ENCODE measurements at regions of chr5 and their contacts with region 1.

Region 1: DNA sequence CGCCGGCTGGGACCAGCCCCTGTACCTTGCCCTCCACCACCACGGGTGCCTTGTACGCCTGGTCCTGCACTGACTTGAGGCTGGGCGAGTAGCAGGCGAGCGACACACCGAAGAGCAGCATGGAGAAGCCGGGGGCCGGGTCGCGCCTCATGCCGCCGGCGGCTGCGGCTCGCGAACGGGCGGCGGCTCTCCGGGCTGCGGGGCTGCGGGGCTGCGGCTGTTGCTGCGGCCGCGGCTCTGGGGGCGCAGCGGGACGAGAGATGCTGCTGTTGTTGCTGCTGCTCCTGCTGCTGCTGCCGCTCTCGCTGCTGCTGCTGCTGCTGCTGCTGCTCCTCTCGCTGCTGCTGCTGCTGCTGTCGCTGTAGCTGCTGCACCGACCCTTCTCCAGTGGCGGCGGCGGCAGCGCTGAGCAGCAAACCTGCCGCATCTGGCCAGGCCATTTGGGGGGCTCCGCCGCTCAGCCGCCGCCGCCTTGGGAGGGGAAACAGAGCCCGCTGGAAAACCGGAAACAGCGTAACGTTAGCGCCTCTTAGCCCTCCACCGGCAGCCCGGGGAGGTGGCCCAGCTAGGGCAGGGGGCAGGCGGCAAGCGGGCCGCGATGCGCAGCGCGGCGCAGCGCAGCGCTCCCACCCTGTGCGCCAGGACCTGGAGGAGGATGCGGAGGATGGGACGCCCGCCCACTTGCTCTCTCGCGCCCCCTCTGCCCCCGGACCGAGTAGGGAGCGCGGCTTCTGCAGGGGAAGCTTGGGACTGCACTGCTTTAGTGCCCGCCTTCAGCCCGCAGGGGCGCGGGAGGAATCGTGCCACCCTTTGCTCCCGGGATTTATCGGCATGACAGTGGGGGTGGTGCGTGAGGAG is at the start of gene NRG2:
- DNase-seq: peak; percentile 84
- ATAC-seq: peak; percentile 92
- total RNA-seq, gene NRG2: 1.9 TPM

Region 2: GRCh38 chr5:139982157-139982974 is 60.5 kb before region 1 on chr5:
- intact Hi-C with region 1: loop called (anchors 5 kb)
- DNase-seq: no peak
- ATAC-seq: no peak

Region 3: DNA sequence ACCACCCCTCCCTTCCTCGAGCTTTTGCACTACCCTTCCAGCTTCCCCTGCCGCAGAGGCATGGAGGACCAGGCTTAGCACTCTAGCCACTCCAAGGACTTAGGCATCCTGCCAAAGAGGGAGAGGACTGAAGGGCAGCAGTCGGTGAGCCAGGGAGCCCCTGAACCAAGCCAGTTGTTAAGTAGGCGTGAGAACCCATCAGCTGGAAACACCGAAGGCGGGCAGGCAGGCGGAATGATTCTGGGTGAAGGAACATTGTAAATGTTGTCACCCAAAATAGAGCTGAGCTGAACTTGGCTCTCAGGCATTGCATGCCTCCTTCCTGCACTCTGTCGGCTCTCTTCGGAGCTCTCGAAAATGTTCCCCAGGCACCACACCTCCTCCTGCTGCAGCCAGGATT is 42.5 kb before region 1 on chr5:
- intact Hi-C with region 1: loop called (anchors 5 kb)
- DNase-seq: peak; percentile 73
- ATAC-seq: peak; percentile 80

Region 4: DNA sequence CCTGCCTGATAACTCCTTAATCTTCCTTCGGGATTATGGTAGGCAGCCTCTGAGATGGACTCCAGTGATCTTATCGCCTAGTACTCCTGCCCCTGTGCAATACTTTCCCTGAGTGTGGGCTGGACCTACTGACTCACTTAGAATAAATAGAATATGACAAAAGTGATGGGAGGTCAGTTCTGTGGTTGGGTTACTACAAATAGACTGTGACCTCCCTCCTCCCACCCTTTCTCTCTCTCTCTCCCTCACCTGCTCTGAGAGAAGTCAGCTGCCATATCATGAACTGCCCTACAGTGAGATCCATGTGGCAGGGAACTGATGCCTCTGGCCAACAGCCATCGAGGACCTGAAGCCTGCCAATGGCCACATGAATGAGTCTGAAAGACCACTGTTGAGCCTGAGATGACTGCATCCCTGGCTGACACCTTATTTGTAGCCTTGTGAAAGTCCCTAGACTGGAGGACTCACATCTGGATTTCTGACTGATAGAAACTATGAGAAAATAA is 31.5 kb before region 1 on chr5:
- intact Hi-C with region 1: no loop called
- DNase-seq: no peak
- ATAC-seq: peak; percentile 84

Region 5: DNA sequence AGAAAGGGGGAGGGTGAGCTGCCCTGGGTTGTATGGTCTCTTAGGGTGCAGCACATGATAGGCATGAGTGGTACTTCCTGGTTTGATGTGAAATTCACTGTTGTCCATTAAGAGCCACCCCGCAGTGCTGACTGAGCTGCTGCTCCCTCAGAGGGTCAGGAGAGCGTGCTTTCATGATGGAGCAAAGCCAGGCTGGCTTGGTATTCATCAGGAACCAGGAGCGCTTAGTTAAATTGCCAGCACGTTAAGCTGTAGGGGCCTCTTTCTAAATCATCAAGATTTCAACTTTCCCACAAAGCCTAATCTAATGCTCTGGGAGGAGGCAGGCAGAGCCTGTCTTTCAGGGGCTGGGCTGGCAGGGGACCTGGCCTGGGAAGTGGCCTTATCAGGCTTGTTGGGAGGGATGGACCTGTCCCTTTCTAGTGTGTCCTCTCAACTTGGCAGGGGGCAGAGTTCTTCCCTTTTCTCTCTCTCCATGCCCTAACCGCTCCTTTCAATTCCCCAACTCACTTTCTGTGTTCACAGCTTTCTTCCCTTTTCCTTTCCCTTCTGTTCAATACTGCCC is 140.0 kb after region 1 on chr5:
- intact Hi-C with region 1: no loop called
- DNase-seq: no peak
- ATAC-seq: peak; percentile 69

Measured in Right ventricle myocardium inferior (tissue), 1 donor.